ENCODE measurements at regions of chr20 and their contacts with region 1.

Region 1: DNA sequence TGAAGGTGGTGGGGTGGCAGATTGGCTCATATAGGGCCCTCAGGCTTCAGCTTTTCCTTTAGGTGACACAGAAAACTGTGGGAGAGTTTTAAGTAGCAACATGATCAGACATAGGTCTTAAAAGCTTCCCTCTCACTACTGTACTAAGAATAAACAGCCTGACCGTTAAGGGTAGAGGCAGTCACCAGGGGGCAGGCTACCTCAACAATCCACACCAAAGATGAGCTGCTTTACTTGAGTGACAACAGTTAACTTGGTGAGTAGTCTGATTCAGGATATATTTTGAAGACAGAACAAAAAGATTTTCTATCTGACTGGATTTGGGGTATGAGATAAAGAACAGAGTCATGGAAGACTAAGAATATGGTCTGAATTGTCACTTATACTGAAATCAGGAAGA is 193.1 kb upstream of the SHLD1 start:
- DNase-seq: peak; percentile 56
- H3K4me3 Mint-ChIP-seq: no peak overlapping the region
- H3K27ac Mint-ChIP-seq: no peak overlapping the region
- H3K4me1 Mint-ChIP-seq: peaks cover 4% of the 10 kb centered on the region
- H3K27me3 Mint-ChIP-seq: no peaks in the 10 kb centered on the region
- CTCF ChIP-seq: peak; percentile 60

Region 2: DNA sequence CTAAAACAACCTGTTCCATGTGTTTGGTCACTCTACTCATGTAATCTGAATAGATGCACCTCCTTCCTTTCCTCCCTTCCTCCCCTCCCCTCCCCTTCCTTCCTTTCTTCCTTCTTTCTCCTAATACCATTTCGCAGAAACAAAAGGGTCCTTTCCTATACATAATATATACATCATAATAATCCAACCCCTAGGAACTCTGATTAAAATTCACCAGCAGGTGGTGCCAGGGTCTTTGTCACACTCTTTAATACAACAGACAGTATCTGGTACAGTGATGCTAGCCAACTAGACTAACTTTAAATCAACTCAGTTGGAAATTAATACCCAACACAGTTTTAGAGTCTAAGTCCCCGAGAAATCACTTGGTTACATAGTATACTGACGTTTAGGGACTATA is 11.9 kb after region 1 on chr20:
- CTCF ChIA-PET with region 1: interaction called, 67 read pairs
- POLR2A ChIA-PET with region 1: interaction called, 7 read pairs
- intact Hi-C with region 1: no loop called
- DNase-seq: peak; percentile 67
- H3K4me3 Mint-ChIP-seq: no peak overlapping the region
- H3K27ac Mint-ChIP-seq: no peak overlapping the region
- H3K4me1 Mint-ChIP-seq: peaks cover 6% of the 10 kb centered on the region
- H3K27me3 Mint-ChIP-seq: no peaks in the 10 kb centered on the region
- CTCF ChIP-seq: peak; percentile 57

Region 3: GRCh38 chr20:5592823-5593739 is 36.0 kb after region 1 on chr20:
- CTCF ChIA-PET with region 1: interaction called, 5 read pairs
- POLR2A ChIA-PET with region 1: interaction called, 10 read pairs
- intact Hi-C with region 1: no loop called
- DNase-seq: no peak
- H3K4me3 Mint-ChIP-seq: no peak overlapping the region
- H3K27ac Mint-ChIP-seq: no peak overlapping the region
- H3K4me1 Mint-ChIP-seq: peaks cover 6% of the 10 kb centered on the region
- H3K27me3 Mint-ChIP-seq: no peaks in the 10 kb centered on the region
- CTCF ChIP-seq: no peak

Measured in MCF 10A (cell line).